A549 (cell line): ENCODE measurements at regions of chr7 and their contacts with region 1.

Region 1: GRCh38 chr7:13524076-13524475 is 465.4 kb downstream of the ETV1 start:
- DNase-seq: no peak
- ATAC-seq: no peak
- H3K4me3 ChIP-seq: no peak overlapping the region
- H3K27ac ChIP-seq: no peak overlapping the region
- H3K4me1 ChIP-seq: no peaks in the 10 kb centered on the region
- CTCF ChIP-seq: no peak
- EP300 ChIP-seq: no peak
- POLR2A ChIP-seq: no peak
- RAD21 ChIP-seq: no peak

Region 2: GRCh38 chr7:13265270-13265669 is 258.8 kb before region 1 on chr7:
- CTCF ChIA-PET with region 1: no interaction called
- POLR2A ChIA-PET with region 1: no interaction called
- DNase-seq: no peak
- ATAC-seq: no peak
- H3K4me3 ChIP-seq: no peak overlapping the region
- H3K27ac ChIP-seq: no peak overlapping the region
- H3K4me1 ChIP-seq: no peaks in the 10 kb centered on the region
- CTCF ChIP-seq: no peak
- EP300 ChIP-seq: no peak
- POLR2A ChIP-seq: no peak
- RAD21 ChIP-seq: no peak

Region 3: DNA sequence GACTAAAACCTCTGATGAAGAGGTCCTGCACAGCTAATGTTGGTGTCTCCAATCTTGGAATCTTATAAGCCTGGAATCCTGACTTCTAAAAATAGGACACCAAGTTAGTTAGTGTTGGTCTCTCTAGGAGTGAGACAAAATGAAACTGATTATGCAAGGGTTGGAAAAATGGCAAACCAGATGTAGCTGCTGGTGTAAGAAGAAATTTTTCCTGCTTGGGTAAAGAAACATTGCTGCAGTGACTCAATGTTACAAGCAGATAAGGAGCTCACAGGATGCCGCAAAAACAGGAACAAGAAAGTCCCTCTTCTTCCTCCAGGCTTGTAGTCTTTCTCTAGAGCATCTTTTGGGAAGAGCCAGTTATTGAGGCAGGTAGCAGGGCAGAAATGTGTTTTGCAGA is 16.4 kb after region 1 on chr7:
- CTCF ChIA-PET with region 1: interaction called, 10 read pairs
- POLR2A ChIA-PET with region 1: no interaction called
- DNase-seq: no peak
- ATAC-seq: no peak
- H3K4me3 ChIP-seq: no peak overlapping the region
- H3K27ac ChIP-seq: no peak overlapping the region
- H3K4me1 ChIP-seq: no peaks in the 10 kb centered on the region
- CTCF ChIP-seq: no peak
- EP300 ChIP-seq: no peak
- POLR2A ChIP-seq: no peak
- RAD21 ChIP-seq: no peak